ENCODE measurements at regions of chr17 and their contacts with region 1.

Region 1: DNA sequence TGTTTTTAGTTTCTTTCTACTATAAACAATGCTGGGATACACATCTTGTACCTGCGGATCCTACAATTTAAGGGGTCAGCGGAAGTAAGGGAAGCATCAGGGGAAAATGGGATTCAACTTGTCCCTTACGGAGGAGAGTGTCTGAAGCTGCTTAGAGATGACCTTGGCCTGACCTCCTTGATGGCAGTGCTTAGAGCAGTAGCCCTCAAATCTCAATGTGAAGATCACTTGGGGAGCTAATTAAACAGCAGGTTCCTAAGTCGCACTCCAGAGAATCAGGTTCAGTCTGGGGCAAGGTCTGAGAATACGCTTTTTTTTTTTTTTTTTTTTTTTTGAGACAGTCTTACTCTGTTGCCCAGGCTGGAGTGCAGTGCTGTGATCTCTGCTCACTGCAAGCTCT is 9.6 kb upstream of the METTL16 start:
- DNase-seq: no peak
- H3K4me3 Mint-ChIP-seq: no peak overlapping the region
- H3K27ac Mint-ChIP-seq: no peak overlapping the region
- H3K4me1 Mint-ChIP-seq: no peaks in the 10 kb centered on the region
- H3K27me3 Mint-ChIP-seq: peaks cover under 1% of the 10 kb centered on the region

Region 2: DNA sequence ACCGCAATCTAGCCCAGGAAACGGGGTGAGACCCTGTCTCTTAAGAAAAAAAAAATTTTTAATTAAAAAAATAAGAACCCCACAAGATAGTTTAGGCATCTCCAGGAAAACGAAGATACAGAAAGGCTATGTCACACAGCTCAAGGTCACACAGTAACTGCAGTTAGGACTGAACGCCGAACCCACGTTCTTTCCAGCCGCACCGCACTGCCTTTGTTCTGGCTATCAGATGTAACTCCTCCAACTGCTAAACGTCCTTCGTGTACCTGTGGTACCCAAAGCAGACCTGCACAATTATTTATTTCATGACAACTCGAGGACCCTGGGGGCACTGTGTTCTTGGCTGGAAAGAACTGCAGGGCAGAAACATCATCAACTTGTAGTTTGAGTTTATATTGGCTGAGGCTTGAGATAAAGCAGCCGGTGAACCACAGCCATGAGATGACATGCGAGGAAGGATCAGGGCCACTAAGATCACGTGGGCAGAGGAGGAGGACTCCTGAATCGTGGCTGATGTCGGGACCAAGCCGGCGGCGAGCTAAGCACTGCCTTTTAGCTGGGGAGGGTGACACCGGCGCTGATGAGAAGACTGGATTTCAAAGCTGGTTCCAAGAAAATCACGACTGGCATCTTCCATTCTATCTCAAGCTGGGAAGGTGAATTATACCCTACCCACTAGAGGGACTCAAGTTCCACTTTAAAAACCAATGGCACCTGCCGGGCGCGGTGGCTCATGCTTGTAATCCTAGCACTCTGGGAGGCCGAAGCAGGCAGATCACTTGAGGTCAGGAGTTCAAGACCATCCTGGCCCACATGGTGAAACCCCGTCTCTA is 99.7 kb before region 1 on chr17:
- intact Hi-C with region 1: no loop called
- DNase-seq: no peak
- H3K4me3 Mint-ChIP-seq: no peak overlapping the region
- H3K27ac Mint-ChIP-seq: no peak overlapping the region
- H3K4me1 Mint-ChIP-seq: no peaks in the 10 kb centered on the region
- H3K27me3 Mint-ChIP-seq: no peaks in the 10 kb centered on the region

Region 3: GRCh38 chr17:2563061-2563460 is 41.8 kb after region 1 on chr17:
- intact Hi-C with region 1: loop called (anchors 1 kb)
- DNase-seq: no peak
- H3K4me3 Mint-ChIP-seq: no peak overlapping the region
- H3K27ac Mint-ChIP-seq: no peak overlapping the region
- H3K4me1 Mint-ChIP-seq: no peaks in the 10 kb centered on the region
- H3K27me3 Mint-ChIP-seq: peaks cover 5% of the 10 kb centered on the region